ENCODE measurements at regions of chr19 and their contacts with region 1.

Region 1: GRCh38 chr19:57362997-57363705 is at the starts of genes TRAPPC2B and ZNF547:
- DNase-seq: peak; percentile 100
- ATAC-seq: peak; percentile 94
- H3K4me3 ChIP-seq: peak within 1 kb of the TSS; percentile 56 to 80 (median 71)
- H3K4me3 Mint-ChIP-seq: peak within 1 kb of the TSS; percentile 95
- H3K27ac ChIP-seq: peak within 1 kb of the TSS; percentile 85 to 97
- H3K27ac Mint-ChIP-seq: peak within 1 kb of the TSS; percentile 97
- H3K4me1 ChIP-seq: peaks cover 10 to 15% of the 10 kb centered on the region in 2 donors
- H3K4me1 Mint-ChIP-seq: peaks cover 17% of the 10 kb centered on the region
- H3K27me3 ChIP-seq: no peaks in the 10 kb centered on the region
- H3K27me3 Mint-ChIP-seq: no peaks in the 10 kb centered on the region
- CTCF ChIP-seq: no peak
- total RNA-seq, gene TRAPPC2B: 9.6 and 12.4 TPM in 2 replicates
- total RNA-seq, gene ZNF547: 9.7 and 9.9 TPM in 2 replicates

Region 2: DNA sequence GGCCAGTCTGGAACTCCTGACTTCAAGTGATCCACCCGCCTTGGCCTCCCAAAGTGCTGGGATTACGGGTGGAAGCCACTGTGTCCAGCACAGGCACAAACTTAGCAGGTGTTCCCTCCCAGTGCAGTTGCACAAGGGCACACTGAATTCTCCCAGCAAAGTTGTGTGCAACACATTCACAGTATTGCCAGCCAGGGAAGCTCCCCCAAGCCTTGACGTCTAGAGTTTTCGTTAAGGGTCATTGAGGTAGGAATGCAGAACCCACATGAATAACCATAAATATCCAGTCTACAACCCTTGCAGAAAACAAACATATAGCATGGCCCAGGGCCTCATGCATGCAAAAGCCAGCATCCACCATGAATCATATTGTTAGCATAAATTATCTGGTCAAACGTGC is 135.6 kb before region 1 on chr19:
- CTCF ChIA-PET with region 1: no interaction called
- POLR2A ChIA-PET with region 1: no interaction called
- intact Hi-C with region 1: no loop called
- DNase-seq: no peak
- ATAC-seq: no peak
- H3K4me3 ChIP-seq: no peak overlapping the region
- H3K4me3 Mint-ChIP-seq: no peak overlapping the region
- H3K27ac ChIP-seq: no peak overlapping the region
- H3K27ac Mint-ChIP-seq: no peak overlapping the region
- H3K4me1 ChIP-seq: no peaks in the 10 kb centered on the region
- H3K4me1 Mint-ChIP-seq: no peaks in the 10 kb centered on the region
- H3K27me3 ChIP-seq: no peaks in the 10 kb centered on the region
- H3K27me3 Mint-ChIP-seq: no peaks in the 10 kb centered on the region
- CTCF ChIP-seq: no peak

Region 3: GRCh38 chr19:57240311-57241090 is 122.7 kb before region 1 on chr19 and contains the start of gene ZNF805:
- CTCF ChIA-PET with region 1: no interaction called
- POLR2A ChIA-PET with region 1: no interaction called
- intact Hi-C with region 1: loop called (anchors 1 kb)
- DNase-seq: peak; percentile 97
- ATAC-seq: peak; percentile 93
- H3K4me3 ChIP-seq: peak within 1 kb of the TSS; percentile 64 to 99 (median 94)
- H3K4me3 Mint-ChIP-seq: peak within 1 kb of the TSS; percentile 95
- H3K27ac ChIP-seq: peak within 1 kb of the TSS; percentile 77 to 86
- H3K27ac Mint-ChIP-seq: peak within 1 kb of the TSS; percentile 94
- H3K4me1 ChIP-seq: peaks cover 19 to 20% of the 10 kb centered on the region in 2 donors
- H3K4me1 Mint-ChIP-seq: peaks cover 33% of the 10 kb centered on the region
- H3K27me3 ChIP-seq: no peaks in the 10 kb centered on the region
- H3K27me3 Mint-ChIP-seq: no peaks in the 10 kb centered on the region
- CTCF ChIP-seq: no peak
- total RNA-seq, gene ZNF805: 18.9 and 20.0 TPM in 2 replicates

Region 4: GRCh38 chr19:57320180-57321084 is 42.7 kb before region 1 on chr19 and contains the start of gene ZNF543:
- CTCF ChIA-PET with region 1: no interaction called
- POLR2A ChIA-PET with region 1: no interaction called
- intact Hi-C with region 1: loop called (anchors 1 kb)
- DNase-seq: peak; percentile 96
- ATAC-seq: peak; percentile 98
- H3K4me3 ChIP-seq: peak within 1 kb of the TSS; percentile 50 to 95 (median 89)
- H3K4me3 Mint-ChIP-seq: peak within 1 kb of the TSS; percentile 93
- H3K27ac ChIP-seq: peak within 1 kb of the TSS; percentile 85 to 89
- H3K27ac Mint-ChIP-seq: peak within 1 kb of the TSS; percentile 96
- H3K4me1 ChIP-seq: peaks cover 19 to 23% of the 10 kb centered on the region in 2 donors
- H3K4me1 Mint-ChIP-seq: peaks cover 32% of the 10 kb centered on the region
- H3K27me3 ChIP-seq: peaks cover 0 to 21% (median 13%) of the 10 kb centered on the region in 4 experiments
- H3K27me3 Mint-ChIP-seq: peaks cover 24% of the 10 kb centered on the region
- CTCF ChIP-seq: no peak
- total RNA-seq, gene ZNF543: 16.7 and 19.6 TPM in 2 replicates

Region 5: GRCh38 chr19:57410877-57411671 is 47.9 kb after region 1 on chr19 and contains the start of gene ZNF17:
- CTCF ChIA-PET with region 1: no interaction called
- POLR2A ChIA-PET with region 1: no interaction called
- intact Hi-C with region 1: loop called (anchors 1 kb)
- DNase-seq: peak; percentile 93
- ATAC-seq: peak; percentile 100
- H3K4me3 ChIP-seq: peak within 1 kb of the TSS; percentile 66 to 98 (median 89)
- H3K4me3 Mint-ChIP-seq: peak within 1 kb of the TSS; percentile 97
- H3K27ac ChIP-seq: peak within 1 kb of the TSS; percentile 22 to 77
- H3K27ac Mint-ChIP-seq: peak within 1 kb of the TSS; percentile 89
- H3K4me1 ChIP-seq: peaks cover 12 to 17% of the 10 kb centered on the region in 2 donors
- H3K4me1 Mint-ChIP-seq: peaks cover 26% of the 10 kb centered on the region
- H3K27me3 ChIP-seq: no peaks in the 10 kb centered on the region
- H3K27me3 Mint-ChIP-seq: no peaks in the 10 kb centered on the region
- CTCF ChIP-seq: no peak
- total RNA-seq, gene ZNF17: 25.8 and 30.7 TPM in 2 replicates

Region 6: GRCh38 chr19:57578487-57579205 is 215.5 kb after region 1 on chr19 and contains the start of gene ZNF416:
- CTCF ChIA-PET with region 1: no interaction called
- POLR2A ChIA-PET with region 1: no interaction called
- intact Hi-C with region 1: loop called (anchors 1 kb)
- DNase-seq: peak; percentile 99
- ATAC-seq: peak; percentile 89
- H3K4me3 ChIP-seq: peak within 1 kb of the TSS; percentile 28 to 90 (median 72)
- H3K4me3 Mint-ChIP-seq: peak within 1 kb of the TSS; percentile 86
- H3K27ac ChIP-seq: peak within 1 kb of the TSS; percentile 46 to 79
- H3K27ac Mint-ChIP-seq: peak within 1 kb of the TSS; percentile 94
- H3K4me1 ChIP-seq: peaks cover 19 to 27% of the 10 kb centered on the region in 2 donors
- H3K4me1 Mint-ChIP-seq: peaks cover 25% of the 10 kb centered on the region
- H3K27me3 ChIP-seq: no peaks in the 10 kb centered on the region
- H3K27me3 Mint-ChIP-seq: no peaks in the 10 kb centered on the region
- CTCF ChIP-seq: no peak
- total RNA-seq, gene ZNF416: 13.0 and 13.9 TPM in 2 replicates

Region 7: DNA sequence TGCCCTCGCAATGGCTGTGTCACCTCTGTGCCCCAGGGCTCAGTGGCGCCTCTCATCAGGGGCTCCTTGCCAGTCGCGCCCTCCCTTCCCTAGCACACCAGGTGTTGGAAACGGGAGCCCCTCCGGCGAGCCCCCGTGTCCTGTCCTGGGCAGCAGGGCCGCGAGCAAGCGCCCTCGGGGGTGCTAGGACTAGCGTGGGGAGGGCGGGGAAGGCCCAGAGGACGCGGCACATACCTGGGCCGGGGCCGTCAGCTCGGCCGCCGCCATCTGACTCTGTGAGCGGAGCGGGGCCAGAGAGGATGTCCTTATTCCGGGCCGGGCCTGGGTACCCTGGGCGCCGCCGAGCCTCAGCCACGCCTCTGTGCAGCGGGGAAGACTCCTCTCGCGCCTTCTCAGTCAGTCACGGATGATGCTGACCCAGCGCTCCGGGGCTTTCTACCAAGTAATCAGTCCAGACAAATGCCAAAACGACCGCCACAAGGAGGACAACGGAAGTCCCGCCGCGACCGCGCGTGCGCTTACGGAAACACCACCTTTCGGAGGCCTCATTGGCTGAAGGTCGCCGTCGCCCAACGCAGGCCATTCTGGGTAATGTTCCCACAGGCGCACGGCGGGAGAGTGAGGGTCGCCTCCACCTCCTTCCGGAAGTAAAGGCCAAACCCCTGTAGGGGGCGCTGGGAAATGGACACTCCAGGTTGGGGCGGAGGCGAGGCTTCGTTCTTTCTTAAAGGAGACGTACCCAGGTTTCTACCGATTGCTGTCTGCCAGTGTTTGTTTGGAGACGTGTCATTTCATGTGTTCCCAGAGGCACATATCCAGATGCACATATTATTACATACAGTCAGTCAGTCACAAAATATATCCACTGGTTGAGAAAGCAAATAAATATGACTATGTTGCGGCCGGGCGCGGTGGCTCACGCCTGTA is 584.3 kb after region 1 on chr19 and contains the start of gene ZNF256:
- CTCF ChIA-PET with region 1: no interaction called
- POLR2A ChIA-PET with region 1: no interaction called
- intact Hi-C with region 1: loop called (anchors 1 kb)
- DNase-seq: peak; percentile 95
- ATAC-seq: peak; percentile 99
- H3K4me3 ChIP-seq: peak within 1 kb of the TSS; percentile 71 to 90 (median 87)
- H3K4me3 Mint-ChIP-seq: peak within 1 kb of the TSS; percentile 96
- H3K27ac ChIP-seq: peak within 1 kb of the TSS; percentile 77 to 89
- H3K27ac Mint-ChIP-seq: peak within 1 kb of the TSS; percentile 89
- H3K4me1 ChIP-seq: peaks cover 16 to 27% of the 10 kb centered on the region in 2 donors
- H3K4me1 Mint-ChIP-seq: peaks cover 36% of the 10 kb centered on the region
- H3K27me3 ChIP-seq: peaks cover 0 to 6% (median 0%) of the 10 kb centered on the region in 4 experiments
- H3K27me3 Mint-ChIP-seq: peaks cover 6% of the 10 kb centered on the region
- CTCF ChIP-seq: peak; percentile 61
- total RNA-seq, gene ZNF256: 18.3 and 19.0 TPM in 2 replicates